Activated CD4-positive, alpha-beta memory T cell treated with anti-CD3 and anti-CD28 coated beads for 36 hours (primary cell): ENCODE measurements at regions of chr22 and their contacts with region 1.

Region 1: DNA sequence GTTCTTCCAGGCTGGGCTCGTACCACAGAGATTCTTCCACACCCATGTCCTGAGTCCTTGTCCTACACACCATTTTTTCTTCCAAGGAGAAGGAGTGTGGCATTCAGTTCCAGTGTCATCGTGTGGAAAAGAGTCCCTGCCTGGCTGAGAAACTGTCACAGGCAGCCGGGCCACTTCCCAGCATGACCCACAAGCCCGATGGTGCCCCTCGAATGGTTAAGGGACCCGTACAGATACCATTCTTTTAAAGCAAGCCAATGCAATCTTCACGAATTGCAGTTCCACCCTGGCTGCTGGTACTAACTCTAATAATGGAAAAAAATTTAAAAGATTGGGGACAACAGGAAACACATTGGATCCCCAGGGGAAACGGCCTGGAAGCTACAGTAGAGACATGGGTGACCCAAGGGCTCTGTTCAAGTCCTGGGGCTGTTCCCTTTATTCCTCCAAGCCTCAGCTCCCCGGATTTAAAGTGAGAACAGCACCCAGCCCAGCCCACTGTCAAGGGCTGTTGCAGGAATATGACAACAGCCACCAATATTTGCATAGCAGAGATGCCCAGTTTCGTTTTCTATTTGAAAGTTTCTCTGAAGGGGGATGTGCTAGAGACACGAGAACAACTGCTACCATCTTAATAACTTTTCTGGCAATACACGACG is 80.9 kb upstream of the WNT7B start:
- DNase-seq: peak; percentile 61
- H3K4me3 Mint-ChIP-seq: peak overlapping the region; percentile 26
- H3K27ac Mint-ChIP-seq: peak overlapping the region; percentile 85
- H3K4me1 Mint-ChIP-seq: peaks cover 38% of the 10 kb centered on the region
- H3K27me3 Mint-ChIP-seq: no peaks in the 10 kb centered on the region

Region 2: DNA sequence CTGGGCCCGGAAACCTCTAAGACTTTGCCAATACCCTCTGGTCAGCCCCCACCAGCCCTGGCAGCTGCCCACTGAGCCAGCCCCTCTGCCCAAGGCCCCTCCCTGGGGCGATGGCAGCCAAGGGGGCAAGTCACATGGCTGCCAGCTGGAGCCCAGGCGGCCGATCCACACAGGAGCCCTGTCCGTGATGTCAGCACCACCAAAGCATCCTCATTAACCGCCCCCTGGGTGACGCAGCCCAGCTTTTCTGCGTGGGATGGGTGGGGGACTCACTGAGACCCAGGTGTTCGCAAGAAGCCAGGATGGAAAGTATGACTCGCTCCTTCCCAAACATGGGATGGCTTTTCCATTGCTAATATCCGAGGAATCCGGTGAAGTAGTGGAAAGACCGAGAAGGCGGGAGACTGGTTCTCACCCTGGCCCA is 34.3 kb before region 1 on chr22:
- CTCF ChIA-PET with region 1: no interaction called
- POLR2A ChIA-PET with region 1: no interaction called
- intact Hi-C with region 1: no loop called
- DNase-seq: no peak
- H3K4me3 Mint-ChIP-seq: no peak overlapping the region
- H3K27ac Mint-ChIP-seq: no peak overlapping the region
- H3K4me1 Mint-ChIP-seq: peaks cover 4% of the 10 kb centered on the region
- H3K27me3 Mint-ChIP-seq: peaks cover 30% of the 10 kb centered on the region

Region 3: GRCh38 chr22:46035742-46036557 is 21.9 kb before region 1 on chr22:
- CTCF ChIA-PET with region 1: interaction called, 8 read pairs
- POLR2A ChIA-PET with region 1: interaction called, 24 read pairs
- intact Hi-C with region 1: loop called (anchors 1 kb)
- DNase-seq: peak; percentile 100
- H3K4me3 Mint-ChIP-seq: peak overlapping the region; percentile 83
- H3K27ac Mint-ChIP-seq: peak overlapping the region; percentile 86
- H3K4me1 Mint-ChIP-seq: peaks cover 12% of the 10 kb centered on the region
- H3K27me3 Mint-ChIP-seq: no peaks in the 10 kb centered on the region